Left cardiac atrium (tissue), 4 donors: ENCODE measurements at regions of chr14 and their contacts with region 1.

Region 1: DNA sequence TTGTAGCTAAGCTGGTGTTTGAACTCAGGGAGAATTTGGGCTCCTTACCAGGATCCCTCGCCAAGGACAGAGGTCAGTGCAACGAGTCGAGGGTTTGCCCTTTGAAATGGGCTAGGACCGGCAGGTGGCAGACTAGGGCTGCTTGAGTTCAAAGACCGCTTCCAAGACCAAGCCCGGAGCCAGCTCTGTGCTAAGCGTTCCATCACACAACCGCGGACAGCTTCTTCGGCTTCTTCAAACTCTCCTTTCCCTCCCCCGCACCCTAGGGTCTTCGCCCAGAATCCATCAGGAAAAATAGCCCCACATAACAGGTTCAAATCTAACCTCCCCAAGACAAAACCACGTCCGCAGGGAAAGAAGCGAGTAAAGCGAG is 705 bp upstream of the FLVCR2 start:
- DNase-seq: peak; percentile 92
- ATAC-seq: peak; percentile 79 to 94

Region 2: DNA sequence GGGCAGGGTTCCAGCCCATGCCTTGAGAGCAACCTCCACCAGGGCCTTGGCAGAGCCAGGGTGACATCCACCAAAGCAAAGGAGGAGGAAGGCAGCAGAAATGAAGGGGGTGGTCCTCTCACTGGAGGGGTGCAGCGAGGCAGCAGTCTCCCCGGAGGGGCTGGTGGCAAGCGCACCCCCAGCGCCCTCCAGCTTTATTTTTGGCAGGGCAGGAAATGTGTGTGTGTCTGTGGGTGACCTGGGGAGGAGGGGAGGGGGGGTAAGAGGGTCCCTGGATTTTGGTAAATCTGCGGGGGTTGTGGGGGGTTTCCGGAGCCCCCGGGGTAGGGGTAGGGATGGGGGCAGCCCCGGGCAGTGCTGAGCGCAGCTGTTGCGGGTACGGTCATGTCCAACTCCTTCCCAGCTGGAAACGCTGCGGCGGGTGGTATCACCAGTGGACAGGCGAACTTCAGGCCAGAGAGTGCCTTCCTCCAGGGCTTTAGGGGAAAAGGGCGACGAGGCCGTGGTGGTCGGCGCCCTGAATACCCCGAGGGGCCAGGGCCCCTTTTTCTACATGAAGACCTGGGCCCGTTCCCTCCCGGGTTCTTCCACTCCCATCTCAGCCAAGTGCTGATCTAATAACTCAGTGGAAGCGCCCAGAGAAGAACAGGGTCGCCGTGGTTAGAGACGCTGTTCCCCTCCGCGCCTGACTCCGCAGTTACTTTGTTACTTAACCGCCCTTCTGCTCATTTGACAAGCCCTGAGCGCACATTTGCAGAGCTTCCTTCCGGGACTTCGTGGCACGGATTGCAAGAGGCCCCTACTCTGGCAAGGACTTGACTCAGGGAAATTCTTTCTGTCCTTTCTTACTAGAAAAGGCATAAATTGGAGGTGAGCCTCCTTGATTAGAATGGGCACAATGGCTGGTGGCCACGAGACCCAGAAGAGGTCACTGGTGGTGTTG is 243.8 kb before region 1 on chr14:
- intact Hi-C with region 1: no loop called
- DNase-seq: peak; percentile 68
- ATAC-seq: peak; percentile 67 to 72

Region 3: GRCh38 chr14:75531660-75532317 is 45.9 kb before region 1 on chr14:
- intact Hi-C with region 1: no loop called
- DNase-seq: no peak
- ATAC-seq: no peak

Region 4: GRCh38 chr14:75654127-75654732 is 76.5 kb after region 1 on chr14:
- intact Hi-C with region 1: loop called (anchors 1 to 2 kb)
- DNase-seq: peak; percentile 79
- ATAC-seq: peak; percentile 87 to 89

Region 5: GRCh38 chr14:75757644-75758402 is 180.1 kb after region 1 on chr14:
- intact Hi-C with region 1: no loop called
- DNase-seq: no peak
- ATAC-seq: no peak